HCT116 (cell line): ENCODE measurements at regions of chr3 and their contacts with region 1.

Region 1: GRCh38 chr3:3200632-3201212 is 21.2 kb upstream of the CRBN start:
- DNase-seq: peak; percentile 31
- ATAC-seq: peak; percentile 67; the same call in 1 of the 2 replicates
- H3K4me3 ChIP-seq: no peak overlapping the region
- H3K27ac ChIP-seq: no peak overlapping the region
- H3K4me1 ChIP-seq: no peaks in the 10 kb centered on the region
- H3K27me3 ChIP-seq: no peaks in the 10 kb centered on the region
- CTCF ChIP-seq: peak; percentile 45 to 80 (median 72); a peak in 5 of 6 replicates
- POLR2A ChIP-seq: no peak
- RAD21 ChIP-seq: peak; percentile 75

Region 2: GRCh38 chr3:2898591-2899353 is 301.9 kb before region 1 on chr3:
- CTCF ChIA-PET with region 1: no interaction called
- POLR2A ChIA-PET with region 1: no interaction called
- RAD21 ChIA-PET with region 1: no interaction called
- intact Hi-C with region 1: no loop called
- DNase-seq: no peak
- ATAC-seq: no peak
- H3K4me3 ChIP-seq: no peak overlapping the region
- H3K27ac ChIP-seq: no peak overlapping the region
- H3K4me1 ChIP-seq: no peaks in the 10 kb centered on the region
- H3K27me3 ChIP-seq: no peaks in the 10 kb centered on the region
- CTCF ChIP-seq: no peak
- POLR2A ChIP-seq: no peak
- RAD21 ChIP-seq: no peak

Region 3: GRCh38 chr3:3636810-3637422 is 436.2 kb after region 1 on chr3:
- CTCF ChIA-PET with region 1: no interaction called
- POLR2A ChIA-PET with region 1: no interaction called
- RAD21 ChIA-PET with region 1: no interaction called
- intact Hi-C with region 1: no loop called
- DNase-seq: no peak
- ATAC-seq: no peak
- H3K4me3 ChIP-seq: no peak overlapping the region
- H3K27ac ChIP-seq: no peak overlapping the region
- H3K4me1 ChIP-seq: no peaks in the 10 kb centered on the region
- H3K27me3 ChIP-seq: no peaks in the 10 kb centered on the region
- CTCF ChIP-seq: no peak
- POLR2A ChIP-seq: no peak
- RAD21 ChIP-seq: no peak

Region 4: GRCh38 chr3:3998140-3998922 is 797.6 kb after region 1 on chr3:
- CTCF ChIA-PET with region 1: interaction called, 22 read pairs
- POLR2A ChIA-PET with region 1: no interaction called
- RAD21 ChIA-PET with region 1: interaction called, 3 to 4 read pairs
- intact Hi-C with region 1: loop called (anchors 1 kb)
- DNase-seq: peak; percentile 2
- ATAC-seq: peak; percentile 25; the same call in 1 of the 2 replicates
- H3K4me3 ChIP-seq: no peak overlapping the region
- H3K27ac ChIP-seq: no peak overlapping the region
- H3K4me1 ChIP-seq: no peaks in the 10 kb centered on the region
- H3K27me3 ChIP-seq: no peaks in the 10 kb centered on the region
- CTCF ChIP-seq: peak; percentile 11 to 68 (median 39); a peak in 4 of 6 replicates
- POLR2A ChIP-seq: no peak
- RAD21 ChIP-seq: peak; percentile 42; the same call in 1 of the 2 replicates

Region 5: GRCh38 chr3:4271834-4272233 is 1071.1 kb after region 1 on chr3:
- CTCF ChIA-PET with region 1: interaction called, 21 read pairs
- POLR2A ChIA-PET with region 1: no interaction called
- RAD21 ChIA-PET with region 1: no interaction called
- intact Hi-C with region 1: loop called (anchors 1 kb)
- DNase-seq: peak; percentile 19
- ATAC-seq: peak; percentile 57
- H3K4me3 ChIP-seq: no peak overlapping the region
- H3K27ac ChIP-seq: no peak overlapping the region
- H3K4me1 ChIP-seq: no peaks in the 10 kb centered on the region
- H3K27me3 ChIP-seq: peaks cover 14% of the 10 kb centered on the region
- CTCF ChIP-seq: peak; percentile 17 to 62 (median 35); a peak in 4 of 6 replicates
- POLR2A ChIP-seq: no peak
- RAD21 ChIP-seq: peak; percentile 58

Region 6: GRCh38 chr3:4290272-4290893 is 1089.7 kb after region 1 on chr3:
- CTCF ChIA-PET with region 1: interaction called, 31 read pairs
- POLR2A ChIA-PET with region 1: no interaction called
- RAD21 ChIA-PET with region 1: interaction called in 1 of 2 experiments, 3 read pairs
- intact Hi-C with region 1: loop called (anchors 1 kb)
- DNase-seq: no peak
- ATAC-seq: peak; percentile 69
- H3K4me3 ChIP-seq: no peak overlapping the region
- H3K27ac ChIP-seq: no peak overlapping the region
- H3K4me1 ChIP-seq: no peaks in the 10 kb centered on the region
- H3K27me3 ChIP-seq: peaks cover 36% of the 10 kb centered on the region
- CTCF ChIP-seq: peak; percentile 47 to 85 (median 78); a peak in 5 of 6 replicates
- POLR2A ChIP-seq: no peak
- RAD21 ChIP-seq: peak; percentile 71